Adrenal gland (tissue), 19 donors: ENCODE measurements at regions of chr9 and their contacts with region 1.

Region 1: DNA sequence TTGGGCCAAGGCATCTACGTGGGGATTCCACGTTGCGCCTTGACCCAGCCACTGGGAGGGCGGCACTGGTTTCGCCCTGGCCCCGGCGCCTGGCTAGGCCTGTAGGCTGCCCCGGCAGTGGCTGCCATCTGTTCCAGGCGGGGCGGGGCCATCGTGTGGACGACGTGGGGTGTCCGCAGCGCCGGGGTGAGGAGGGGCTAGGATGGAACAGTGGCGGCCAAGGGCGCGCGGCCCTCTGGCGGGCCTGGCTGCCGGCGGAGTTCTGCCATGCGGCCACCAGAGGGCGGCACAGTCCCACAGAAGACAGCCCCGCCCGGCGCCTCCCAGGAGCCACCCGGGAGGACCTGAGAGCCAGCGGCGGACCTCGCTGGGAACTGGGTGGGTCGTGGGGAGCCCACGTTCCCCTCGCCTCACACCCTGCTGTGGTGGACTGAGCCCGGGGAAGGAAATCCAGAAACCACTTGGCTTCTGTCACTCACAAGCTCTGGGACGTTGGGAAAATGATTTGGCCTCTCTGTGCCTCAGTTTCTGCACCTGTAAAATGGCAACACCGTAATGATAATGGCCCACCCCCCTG is 22.6 kb upstream of the RAPGEF1 start:
- DNase-seq: peak; percentile 64 to 83 (median 76)
- H3K4me3 ChIP-seq: no peak overlapping the region
- H3K27ac ChIP-seq: no peak overlapping the region
- H3K4me1 ChIP-seq: peaks cover 0 to 6% of the 10 kb centered on the region in 2 donors
- H3K27me3 ChIP-seq: peaks cover 3% of the 10 kb centered on the region
- CTCF ChIP-seq: peak; percentile 80 to 98 (median 94)
- POLR2A ChIP-seq: no peak

Region 2: DNA sequence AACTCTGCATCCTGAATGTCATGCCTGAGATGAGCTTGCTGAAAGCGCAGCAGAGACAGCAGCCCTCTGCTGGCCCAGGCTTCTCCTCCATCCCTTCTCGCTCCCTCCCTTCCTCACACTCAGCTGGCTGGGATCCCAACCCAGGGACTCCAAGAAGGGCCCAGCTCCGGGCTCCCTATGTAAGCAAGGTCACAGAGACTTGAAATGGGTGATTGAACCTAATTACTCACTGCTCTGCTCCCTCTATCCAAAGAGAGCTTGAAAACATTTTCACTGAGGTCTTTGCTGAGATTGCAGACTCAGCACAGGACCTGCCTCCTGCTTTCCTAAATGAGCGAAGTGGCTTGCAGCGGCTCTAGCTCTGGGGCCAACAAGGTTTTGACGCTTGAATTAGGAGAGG is 65.3 kb before region 1 on chr9:
- intact Hi-C with region 1: no loop called
- DNase-seq: peak; percentile 77 to 95 (median 92)
- H3K4me3 ChIP-seq: no peak overlapping the region
- H3K27ac ChIP-seq: peak overlapping the region in 4 of 5 donors; percentile 46 to 90 (median 78)
- H3K4me1 ChIP-seq: peaks cover 15 to 39% of the 10 kb centered on the region in 2 donors
- H3K27me3 ChIP-seq: no peaks in the 10 kb centered on the region
- CTCF ChIP-seq: peak in 5 of 6 experiments; percentile 36 to 53 (median 43)
- POLR2A ChIP-seq: peak in 1 of 2 donors; percentile 46

Region 3: DNA sequence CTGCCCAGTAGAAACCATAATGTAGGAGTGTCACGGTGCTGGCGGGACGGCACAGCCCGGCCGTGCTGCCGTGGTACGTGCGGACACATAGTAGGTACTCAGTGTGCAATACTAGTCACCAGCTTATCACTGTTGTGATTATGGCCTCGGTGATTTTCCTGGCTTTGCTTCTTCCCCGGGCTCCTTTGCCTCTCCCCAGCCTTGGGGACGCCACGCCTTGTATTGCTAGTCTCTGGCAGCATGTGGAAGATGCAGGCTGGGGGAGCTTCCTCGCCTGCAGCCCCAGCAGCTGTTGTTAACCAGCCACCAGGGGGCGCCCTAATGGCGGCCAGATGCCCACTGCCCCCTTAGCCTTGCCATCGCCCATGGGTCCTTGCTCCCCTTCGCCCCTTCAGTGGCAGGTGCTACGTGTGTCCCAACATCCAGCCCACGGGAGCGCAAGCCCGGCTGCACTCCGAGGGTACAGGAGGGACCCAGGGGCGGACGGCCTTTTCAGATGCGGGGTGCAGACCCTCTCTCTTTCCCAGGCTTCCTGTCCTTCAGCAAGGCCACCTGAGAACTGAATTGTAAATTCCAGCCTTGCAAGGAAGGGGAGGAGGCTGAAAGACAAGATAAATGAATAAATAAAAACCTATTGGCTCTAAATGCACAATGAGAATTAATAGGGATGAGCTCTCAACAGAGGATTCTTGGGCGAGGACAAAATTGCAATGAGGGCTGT is 407.4 kb after region 1 on chr9:
- intact Hi-C with region 1: loop called in 1 of 2 experiments (anchors 5 kb)
- DNase-seq: peak; percentile 45 to 71 (median 61)
- H3K4me3 ChIP-seq: no peak overlapping the region
- H3K27ac ChIP-seq: no peak overlapping the region
- H3K4me1 ChIP-seq: peaks cover 7 to 9% of the 10 kb centered on the region in 2 donors
- H3K27me3 ChIP-seq: no peaks in the 10 kb centered on the region
- CTCF ChIP-seq: peak; percentile 67 to 80 (median 74)
- POLR2A ChIP-seq: no peak

Region 4: GRCh38 chr9:132235946-132236661 is 473.7 kb after region 1 on chr9:
- intact Hi-C with region 1: loop called in 1 of 2 experiments (anchors 5 kb)
- DNase-seq: peak; percentile 68 to 90 (median 81)
- H3K4me3 ChIP-seq: no peak overlapping the region
- H3K27ac ChIP-seq: no peak overlapping the region
- H3K4me1 ChIP-seq: peaks cover 0 to 7% of the 10 kb centered on the region in 2 donors
- H3K27me3 ChIP-seq: peaks cover 4% of the 10 kb centered on the region
- CTCF ChIP-seq: peak; percentile 82 to 96 (median 90)
- POLR2A ChIP-seq: no peak

Region 5: GRCh38 chr9:132249123-132249522 is 486.7 kb after region 1 on chr9:
- intact Hi-C with region 1: loop called (anchors 5 kb)
- DNase-seq: peak in 2 of 7 donors; percentile 52 to 57
- H3K4me3 ChIP-seq: no peak overlapping the region
- H3K27ac ChIP-seq: no peak overlapping the region
- H3K4me1 ChIP-seq: peaks cover 14 to 15% of the 10 kb centered on the region in 2 donors
- H3K27me3 ChIP-seq: no peaks in the 10 kb centered on the region
- CTCF ChIP-seq: no peak
- POLR2A ChIP-seq: no peak

Region 6: GRCh38 chr9:132372177-132373095 is 610.0 kb after region 1 on chr9:
- intact Hi-C with region 1: no loop called
- DNase-seq: peak; percentile 46 to 83 (median 60)
- H3K4me3 ChIP-seq: no peak overlapping the region
- H3K27ac ChIP-seq: peak overlapping the region in 3 of 5 donors; percentile 25 to 76 (median 67)
- H3K4me1 ChIP-seq: peaks cover 0 to 6% of the 10 kb centered on the region in 2 donors
- H3K27me3 ChIP-seq: no peaks in the 10 kb centered on the region
- CTCF ChIP-seq: no peak
- POLR2A ChIP-seq: no peak